ENCODE measurements at regions of chr3 and their contacts with region 1.

Region 1: DNA sequence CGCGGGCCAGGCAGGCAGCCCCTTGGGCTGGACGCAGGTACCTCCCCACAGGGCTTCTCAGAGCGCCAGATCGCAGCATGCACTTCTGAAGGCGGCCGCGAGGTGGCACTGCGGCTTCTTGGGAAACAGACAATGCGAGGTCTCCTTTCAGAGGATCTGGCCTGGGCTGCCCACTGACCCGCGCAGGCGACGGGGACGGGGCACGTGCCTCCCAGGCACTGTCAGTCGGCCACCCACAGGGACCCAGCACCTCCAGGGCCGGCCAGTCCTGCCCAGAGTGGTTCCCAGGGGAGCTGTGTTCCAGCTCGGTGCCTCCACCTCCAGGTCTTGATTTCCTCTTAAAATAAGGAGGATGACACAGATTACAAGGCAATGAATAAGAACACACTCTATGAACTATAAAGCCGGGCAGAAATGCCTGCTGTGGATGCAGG is 24.4 kb upstream of the TXNRD3 start:
- DNase-seq: peak; percentile 85
- CTCF ChIP-seq: peak; percentile 96

Region 2: DNA sequence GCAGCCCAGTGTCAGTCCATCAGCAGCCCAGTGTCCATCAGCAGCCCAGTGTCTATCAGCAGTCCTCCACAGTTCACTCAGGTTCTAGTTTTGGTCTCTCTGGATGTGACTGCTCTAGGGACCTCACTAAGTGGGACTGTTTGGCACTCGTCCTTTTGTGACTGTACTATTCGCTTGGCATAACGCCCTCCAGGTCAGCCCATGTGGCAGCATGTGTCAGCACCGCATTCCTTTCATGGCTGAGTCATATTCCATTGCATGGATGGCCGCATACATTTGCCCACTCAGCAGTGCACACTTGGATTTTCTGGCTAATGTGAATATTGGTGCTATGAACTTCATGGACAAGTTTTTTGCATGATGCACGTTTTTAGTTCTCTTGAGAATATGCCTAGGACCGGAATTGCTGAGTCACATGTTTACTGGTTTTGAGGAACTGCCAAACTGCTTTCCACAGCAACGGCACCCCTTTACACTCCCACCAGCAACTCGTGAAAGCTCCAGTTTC is 138.9 kb before region 1 on chr3:
- CTCF ChIA-PET with region 1: no interaction called
- POLR2A ChIA-PET with region 1: no interaction called
- DNase-seq: no peak
- CTCF ChIP-seq: no peak

Region 3: GRCh38 chr3:126612479-126613205 is 66.7 kb before region 1 on chr3:
- CTCF ChIA-PET with region 1: no interaction called
- POLR2A ChIA-PET with region 1: no interaction called
- DNase-seq: no peak
- CTCF ChIP-seq: no peak

Region 4: DNA sequence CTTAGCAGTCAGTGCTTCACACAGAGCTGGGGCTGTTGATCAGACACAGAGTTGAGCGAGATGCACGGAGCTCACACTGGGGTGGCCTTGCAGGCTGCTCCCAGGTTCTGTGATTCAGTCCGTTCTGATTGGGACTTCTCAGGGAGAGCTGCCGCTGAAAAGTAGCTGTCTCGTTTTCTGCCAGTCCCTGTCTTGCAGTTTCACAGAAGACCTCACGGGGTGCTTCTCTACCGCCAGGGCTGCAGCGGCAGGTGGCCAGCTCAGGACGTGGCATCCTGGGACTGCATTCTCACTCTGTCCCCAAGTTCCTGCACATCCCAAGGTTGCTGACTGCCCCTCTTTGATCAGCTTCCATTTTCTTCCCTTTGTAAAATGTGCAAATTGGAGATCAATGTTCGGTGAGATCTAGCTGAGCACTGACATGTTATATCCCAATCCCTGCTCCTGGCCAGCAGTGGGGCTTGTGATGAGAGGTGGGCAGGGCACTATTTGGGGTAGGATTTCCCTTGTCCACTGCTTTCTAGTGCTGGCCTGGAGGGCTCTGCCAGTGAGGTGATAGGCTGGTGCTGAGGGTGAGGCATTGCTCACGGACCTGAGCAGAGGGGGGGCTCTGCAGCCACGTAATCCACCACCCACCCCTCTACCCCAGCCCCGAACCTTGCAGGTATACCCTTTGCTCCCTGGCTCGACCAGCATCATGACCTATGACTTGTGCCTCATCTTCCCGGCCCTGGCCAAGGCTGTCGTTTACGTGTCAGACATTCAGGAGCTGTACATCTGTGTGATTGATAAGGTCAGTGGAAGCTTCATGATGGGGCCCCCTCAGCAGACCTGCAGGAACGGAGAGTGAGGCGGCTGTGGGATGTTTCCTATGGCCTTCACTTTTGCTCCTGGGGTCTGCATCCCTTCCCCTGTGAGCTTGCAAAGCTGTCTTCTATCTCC is 19.1 kb before region 1 on chr3:
- CTCF ChIA-PET with region 1: interaction called, 16 read pairs
- POLR2A ChIA-PET with region 1: no interaction called
- DNase-seq: no peak
- CTCF ChIP-seq: no peak

Region 5: DNA sequence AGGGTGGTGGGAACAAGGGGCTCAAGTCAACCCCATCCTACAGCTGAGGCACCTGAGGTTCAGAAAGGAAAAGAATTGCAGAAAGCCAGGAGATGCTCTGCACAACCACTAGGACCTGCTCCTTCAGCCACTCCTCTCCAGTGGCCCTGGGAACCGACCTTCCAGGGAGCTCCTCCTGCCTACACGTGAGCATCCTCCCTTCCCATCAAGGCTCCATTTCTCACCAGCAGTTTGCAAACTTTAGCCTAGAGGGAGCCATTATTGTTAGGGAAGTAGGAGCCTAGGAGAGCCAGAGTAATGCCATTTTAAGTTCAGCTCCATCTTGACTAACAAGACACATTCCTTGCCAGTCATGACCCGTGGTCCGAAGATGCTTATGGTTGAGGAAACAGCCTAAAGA is 13.5 kb after region 1 on chr3:
- CTCF ChIA-PET with region 1: interaction called, 32 read pairs
- POLR2A ChIA-PET with region 1: no interaction called
- DNase-seq: no peak
- CTCF ChIP-seq: no peak

Region 6: GRCh38 chr3:127288921-127289705 is 609.8 kb after region 1 on chr3:
- CTCF ChIA-PET with region 1: no interaction called
- POLR2A ChIA-PET with region 1: no interaction called
- DNase-seq: no peak
- CTCF ChIP-seq: no peak

Region 7: DNA sequence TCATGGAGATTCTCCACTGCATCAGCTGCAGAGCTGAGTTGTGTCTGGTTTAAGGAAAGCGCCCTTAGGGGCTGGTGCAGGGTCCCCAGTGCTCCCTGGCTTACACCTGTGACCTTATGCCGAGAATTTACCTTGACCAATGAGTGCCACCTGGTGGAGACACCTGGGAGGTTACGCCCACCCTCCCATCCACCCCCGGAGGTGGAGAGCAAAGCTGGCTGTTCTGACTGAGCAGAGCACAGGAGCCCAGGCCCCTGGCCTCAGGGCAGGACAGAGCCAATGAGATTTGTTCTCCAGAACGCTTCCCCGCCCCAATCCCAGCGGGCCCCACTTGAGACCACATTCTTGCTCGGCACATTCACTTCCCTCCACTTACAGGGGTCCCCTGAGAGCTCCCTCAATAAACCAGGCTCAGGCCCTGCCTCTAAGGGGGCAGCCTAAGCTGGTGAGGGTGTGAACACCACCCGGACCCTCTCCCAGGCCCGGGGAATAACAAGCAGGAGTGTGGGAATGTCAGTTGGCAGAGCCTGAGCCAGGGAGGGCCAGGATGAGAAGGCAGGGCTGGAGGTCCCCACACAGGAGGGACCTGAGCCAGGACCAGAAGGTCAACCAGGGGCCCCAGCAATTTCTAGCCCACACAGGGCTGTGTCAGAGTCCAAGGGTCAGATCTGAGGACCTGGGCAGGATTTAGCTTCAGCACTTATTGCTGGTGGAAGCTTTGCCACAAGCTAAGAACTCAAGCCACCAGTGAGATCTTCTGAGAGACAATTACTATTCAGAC is 794.1 kb after region 1 on chr3:
- CTCF ChIA-PET with region 1: interaction called, 13 read pairs
- POLR2A ChIA-PET with region 1: no interaction called
- DNase-seq: peak; percentile 52
- CTCF ChIP-seq: peak; percentile 40